ENCODE measurements at regions of chr3 and their contacts with region 1.

Region 1: DNA sequence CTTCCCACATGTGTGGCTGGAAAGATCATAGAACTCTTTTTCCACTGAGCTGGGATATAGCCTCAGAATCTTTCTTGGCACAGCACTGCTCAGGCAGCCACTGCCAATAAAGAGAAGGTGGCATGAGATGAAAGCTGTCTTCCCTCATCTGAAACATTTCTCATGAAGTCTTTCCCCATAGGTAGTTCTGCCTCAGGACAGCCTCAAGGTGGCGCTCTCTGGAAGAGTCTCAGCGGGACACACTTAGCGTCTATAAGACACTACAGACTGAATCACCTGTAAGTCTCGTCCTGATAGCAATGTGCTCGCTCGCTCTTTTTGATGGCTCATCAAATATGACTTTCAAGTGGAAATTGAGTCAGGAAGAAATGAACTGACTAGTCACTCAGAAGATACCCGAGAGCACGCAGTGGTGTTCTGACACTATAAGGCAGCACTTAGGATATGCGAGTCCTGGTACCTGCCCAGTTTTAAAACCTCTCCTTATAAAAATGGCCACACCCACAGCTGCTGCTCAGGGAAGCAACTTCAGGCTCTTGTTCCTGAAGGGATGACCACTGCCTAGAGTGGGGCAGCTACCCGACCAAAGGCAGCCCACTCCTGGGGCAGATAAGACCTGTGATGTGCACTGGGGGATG is 269.5 kb downstream of the SUCLG2 start:
- DNase-seq: peak; percentile 42
- ATAC-seq: peak; percentile 88
- H3K4me3 ChIP-seq: no peak overlapping the region
- H3K27ac ChIP-seq: no peak overlapping the region
- H3K4me1 ChIP-seq: no peaks in the 10 kb centered on the region
- H3K27me3 ChIP-seq: no peaks in the 10 kb centered on the region
- CTCF ChIP-seq: peak; percentile 33 to 81 (median 78); a peak in 5 of 6 replicates
- POLR2A ChIP-seq: no peak
- RAD21 ChIP-seq: peak; percentile 59

Region 2: DNA sequence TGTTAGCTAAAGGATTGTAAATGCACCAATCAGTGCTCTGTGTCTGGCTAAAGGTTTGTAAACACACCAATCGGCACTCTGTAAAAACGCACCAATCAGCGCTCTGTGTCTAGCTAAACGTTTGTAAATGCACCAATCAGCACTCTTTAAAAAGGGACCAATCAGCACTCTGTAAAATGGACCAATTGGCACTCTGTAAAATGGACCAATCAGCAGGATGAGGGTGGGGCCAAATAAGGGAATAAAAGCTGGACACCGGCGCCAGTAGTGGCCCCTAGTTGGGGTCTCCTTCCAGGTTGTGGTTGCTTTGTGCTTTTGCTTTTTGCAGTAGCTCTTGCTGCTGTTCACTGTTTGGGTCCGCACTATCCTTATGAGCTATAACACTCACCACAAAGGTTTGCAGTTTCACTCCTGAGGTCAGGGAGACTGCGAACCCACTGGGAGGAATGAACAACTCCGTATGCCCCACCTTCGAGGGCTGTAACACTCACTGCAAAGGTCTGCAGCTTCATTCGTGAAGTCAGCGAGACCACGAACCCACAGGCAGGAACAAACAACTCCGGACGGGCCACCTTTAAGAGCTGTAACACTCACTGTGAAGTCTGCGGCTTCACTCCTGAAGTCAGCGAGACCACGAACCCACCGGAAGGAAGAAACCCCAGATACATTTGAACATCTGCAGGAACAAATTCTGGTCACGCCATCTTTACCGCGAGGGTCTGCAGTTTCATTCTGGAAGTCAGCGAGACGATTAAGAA is 270.7 kb after region 1 on chr3:
- CTCF ChIA-PET with region 1: no interaction called
- POLR2A ChIA-PET with region 1: no interaction called
- RAD21 ChIA-PET with region 1: no interaction called
- intact Hi-C with region 1: no loop called
- DNase-seq: no peak
- ATAC-seq: no peak
- H3K4me3 ChIP-seq: peak overlapping the region; percentile 50 to 71; a peak in 3 of 4 replicates
- H3K27ac ChIP-seq: no peak overlapping the region
- H3K4me1 ChIP-seq: peaks cover 5 to 18% of the 10 kb centered on the region in 2 experiments; a peak in 3 of 4 replicates
- H3K27me3 ChIP-seq: no peaks in the 10 kb centered on the region
- CTCF ChIP-seq: no peak
- POLR2A ChIP-seq: no peak
- RAD21 ChIP-seq: no peak

Region 3: DNA sequence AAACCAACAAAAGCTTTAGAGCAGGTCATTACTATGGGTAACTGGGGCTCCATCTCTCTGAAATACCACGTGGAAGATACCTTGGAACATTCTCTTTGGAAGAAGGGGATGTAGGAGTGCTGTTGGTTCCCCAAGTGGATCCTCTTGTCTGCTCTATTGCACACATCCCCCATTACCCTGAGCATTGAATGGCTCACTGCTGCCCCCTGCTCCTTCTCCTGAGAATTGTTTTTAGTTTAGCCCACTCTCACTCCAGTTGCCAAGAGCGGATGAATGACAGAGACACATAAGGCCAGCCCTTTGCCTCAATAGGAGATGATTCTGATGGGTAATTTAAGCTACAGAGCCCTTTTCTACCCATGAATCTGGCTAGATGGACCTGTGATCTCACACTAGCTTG is 405.2 kb after region 1 on chr3:
- CTCF ChIA-PET with region 1: interaction called, 4 read pairs
- POLR2A ChIA-PET with region 1: no interaction called
- RAD21 ChIA-PET with region 1: no interaction called
- intact Hi-C with region 1: loop called (anchors 1 kb)
- DNase-seq: peak; percentile 23
- ATAC-seq: peak; percentile 94
- H3K4me3 ChIP-seq: no peak overlapping the region
- H3K27ac ChIP-seq: no peak overlapping the region
- H3K4me1 ChIP-seq: no peaks in the 10 kb centered on the region
- H3K27me3 ChIP-seq: no peaks in the 10 kb centered on the region
- CTCF ChIP-seq: peak; percentile 46 to 74 (median 69); a peak in 5 of 6 replicates
- POLR2A ChIP-seq: no peak
- RAD21 ChIP-seq: peak; percentile 65

Region 4: GRCh38 chr3:67863869-67864268 is 479.0 kb after region 1 on chr3:
- CTCF ChIA-PET with region 1: no interaction called
- POLR2A ChIA-PET with region 1: no interaction called
- RAD21 ChIA-PET with region 1: no interaction called
- intact Hi-C with region 1: loop called (anchors 2 kb)
- DNase-seq: peak; percentile 4
- ATAC-seq: peak; percentile 52; the same call in 1 of the 2 replicates
- H3K4me3 ChIP-seq: no peak overlapping the region
- H3K27ac ChIP-seq: no peak overlapping the region
- H3K4me1 ChIP-seq: no peaks in the 10 kb centered on the region
- H3K27me3 ChIP-seq: no peaks in the 10 kb centered on the region
- CTCF ChIP-seq: peak in 2 of 3 experiments; percentile 44 to 60; a peak in 3 of 6 replicates
- POLR2A ChIP-seq: no peak
- RAD21 ChIP-seq: peak; percentile 27

Measured in HCT116 (cell line).